ENCODE measurements at regions of chr21 and their contacts with region 1.

Region 1: GRCh38 chr21:39137248-39138178 is 45.7 kb downstream of the PSMG1 start:
- DNase-seq: no peak
- H3K4me3 ChIP-seq: no peak overlapping the region
- H3K27me3 ChIP-seq: peaks cover 2% of the 10 kb centered on the region; the same call in 1 of the 2 replicates
- CTCF ChIP-seq: peak; percentile 32; the same call in 1 of the 2 replicates

Region 2: DNA sequence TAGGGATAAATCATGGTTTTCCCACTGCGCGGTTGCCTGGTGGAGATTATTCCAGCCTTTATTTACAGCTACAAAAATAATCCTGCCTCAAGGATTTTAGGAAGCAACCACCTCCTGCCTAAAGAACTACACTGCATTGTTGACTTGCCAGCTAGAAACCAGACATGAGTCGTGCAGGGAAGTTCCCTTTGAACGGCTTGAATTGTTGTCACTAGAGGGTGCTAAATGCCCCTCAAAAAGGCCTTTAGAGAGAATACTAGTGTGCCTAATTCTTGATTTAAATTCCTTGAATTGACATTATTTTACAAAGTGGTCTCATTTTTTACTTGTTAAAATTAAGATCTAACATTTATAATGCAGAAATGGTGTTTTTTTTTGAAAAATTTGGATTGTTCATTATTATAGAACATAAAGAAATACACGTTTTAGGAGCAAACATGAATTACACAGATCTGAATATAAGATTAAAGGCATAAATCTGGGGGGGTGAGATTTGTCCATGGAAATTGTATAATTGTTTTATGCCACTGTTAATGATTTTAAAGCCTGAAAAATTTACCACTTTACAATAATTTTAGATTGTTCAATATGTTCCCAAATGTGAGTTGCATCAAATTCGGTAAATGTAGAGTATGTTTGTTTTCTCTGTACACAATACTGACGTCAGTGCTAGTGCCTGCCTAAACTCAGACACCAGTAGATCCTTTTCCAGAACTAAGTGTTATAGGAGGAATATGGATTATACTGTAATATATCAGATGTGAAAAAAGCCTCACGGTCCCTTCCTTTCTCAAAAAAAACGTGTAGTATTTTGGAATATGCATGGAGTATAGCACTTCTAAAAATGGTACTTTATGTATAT is 631.6 kb before region 1 on chr21:
- CTCF ChIA-PET with region 1: interaction called, 13 read pairs
- POLR2A ChIA-PET with region 1: no interaction called
- DNase-seq: no peak
- H3K4me3 ChIP-seq: no peak overlapping the region
- H3K27me3 ChIP-seq: no peaks in the 10 kb centered on the region; the same call in 1 of the 2 replicates
- CTCF ChIP-seq: peak; percentile 83

Region 3: GRCh38 chr21:38733973-38734546 is 403.5 kb before region 1 on chr21:
- CTCF ChIA-PET with region 1: interaction called, 32 read pairs
- POLR2A ChIA-PET with region 1: no interaction called
- DNase-seq: no peak
- H3K4me3 ChIP-seq: no peak overlapping the region
- H3K27me3 ChIP-seq: no peaks in the 10 kb centered on the region
- CTCF ChIP-seq: peak; percentile 94

Region 4: DNA sequence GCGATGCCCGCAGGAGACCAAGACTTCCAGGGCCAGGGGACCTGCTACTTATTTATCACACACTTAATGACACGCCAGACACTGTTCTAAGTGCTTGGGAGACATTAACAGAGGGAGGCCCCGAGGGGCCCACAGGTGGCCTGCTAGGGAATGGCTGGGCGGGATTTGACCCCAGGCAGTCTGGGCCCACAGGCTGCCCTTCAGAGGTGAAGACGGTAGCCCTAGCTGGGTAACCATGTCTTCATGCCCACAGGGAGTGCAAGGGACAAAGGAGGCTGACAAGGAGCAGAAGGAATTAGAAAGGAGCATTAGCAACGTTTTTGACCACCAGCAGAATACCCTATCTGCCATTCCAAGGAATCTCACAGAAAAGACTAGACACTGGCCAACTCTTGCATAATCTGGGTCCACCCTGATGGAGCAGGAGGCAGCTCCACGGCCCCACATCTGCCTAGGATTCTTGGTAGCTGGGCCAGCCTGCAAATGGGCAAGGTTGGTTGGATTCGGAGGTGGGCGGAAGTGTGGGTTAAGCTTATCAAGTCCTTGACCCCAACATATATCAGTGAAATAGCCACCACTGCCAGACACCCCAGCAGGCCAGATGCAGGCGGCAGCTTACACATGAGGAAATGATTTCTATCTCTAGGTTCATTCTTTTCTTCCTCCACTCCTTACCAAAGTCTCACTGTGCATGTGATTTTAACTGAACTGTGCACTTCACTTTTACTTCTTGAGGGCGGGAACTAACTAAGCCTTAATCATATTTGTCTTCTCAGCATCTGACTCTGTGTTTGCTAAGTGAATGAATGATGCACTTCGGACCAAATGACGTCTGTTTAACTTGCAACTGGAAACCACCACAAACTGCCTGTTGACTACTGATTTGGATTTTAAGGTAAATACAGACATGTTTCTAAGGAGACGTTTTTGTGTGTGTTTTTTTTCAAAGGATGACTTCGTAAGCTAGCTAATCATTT is 335.2 kb before region 1 on chr21:
- CTCF ChIA-PET with region 1: interaction called, 10 read pairs
- POLR2A ChIA-PET with region 1: no interaction called
- DNase-seq: no peak
- H3K4me3 ChIP-seq: no peak overlapping the region
- H3K27me3 ChIP-seq: no peaks in the 10 kb centered on the region
- CTCF ChIP-seq: no peak

Region 5: DNA sequence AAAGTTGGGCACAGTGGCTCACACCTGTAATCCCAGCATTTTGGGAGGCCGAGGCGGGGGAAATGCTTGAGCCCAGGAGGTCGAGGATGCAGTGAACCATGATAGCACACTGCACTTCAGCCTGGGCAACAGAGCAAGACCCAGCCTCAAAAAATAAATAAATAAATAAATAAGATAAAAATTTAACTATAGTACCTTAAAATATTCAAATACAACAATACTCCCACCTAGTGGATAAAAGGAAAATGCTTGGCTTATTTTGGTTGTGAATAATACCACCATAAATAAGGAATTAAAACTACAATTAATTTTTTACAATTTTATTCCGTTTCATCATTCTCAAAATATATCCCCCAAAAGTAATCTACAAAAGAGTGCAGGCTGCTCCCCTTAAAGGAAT is 37.6 kb after region 1 on chr21:
- CTCF ChIA-PET with region 1: interaction called, 22 read pairs
- POLR2A ChIA-PET with region 1: no interaction called
- DNase-seq: no peak
- H3K4me3 ChIP-seq: no peak overlapping the region
- H3K27me3 ChIP-seq: no peaks in the 10 kb centered on the region
- CTCF ChIP-seq: peak; percentile 38

Region 6: DNA sequence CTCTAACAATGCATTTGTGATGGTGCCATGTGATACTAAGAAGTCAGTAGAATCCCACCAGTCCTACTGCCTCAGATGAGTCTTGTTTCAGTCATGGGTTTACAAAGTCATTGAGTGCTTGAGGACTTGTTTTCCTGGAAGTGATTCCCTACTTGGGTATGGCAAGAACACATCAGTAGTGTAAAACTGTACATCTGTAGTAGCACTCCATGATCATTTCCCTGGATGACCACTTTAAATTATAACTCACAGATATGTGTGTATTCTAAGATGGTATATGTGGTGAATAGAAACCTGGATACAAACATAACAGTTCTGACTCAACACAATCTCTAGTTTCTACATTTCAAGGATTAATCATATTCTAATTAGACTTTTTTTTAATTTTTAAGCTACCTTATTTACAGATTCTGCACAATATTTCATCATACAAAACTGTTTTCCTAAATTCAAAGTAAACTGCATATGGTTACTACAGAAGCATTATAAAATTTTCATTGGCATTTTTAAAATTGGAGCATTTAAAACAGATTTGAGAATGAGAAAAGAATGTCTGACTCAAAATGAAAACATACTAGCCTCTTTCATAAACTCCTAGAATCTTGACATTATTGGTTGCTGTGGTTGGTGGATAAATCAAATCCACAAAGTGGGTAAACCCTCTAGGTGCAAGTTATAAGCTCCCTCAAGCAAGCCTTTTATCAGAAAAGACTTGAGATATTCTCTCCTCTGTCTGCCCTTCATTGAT is 52.5 kb after region 1 on chr21:
- CTCF ChIA-PET with region 1: no interaction called
- POLR2A ChIA-PET with region 1: no interaction called
- DNase-seq: peak; percentile 37
- H3K4me3 ChIP-seq: no peak overlapping the region
- H3K27me3 ChIP-seq: no peaks in the 10 kb centered on the region
- CTCF ChIP-seq: no peak